H1 (cell line): ENCODE measurements at regions of chr11 and their contacts with region 1.

Region 1: DNA sequence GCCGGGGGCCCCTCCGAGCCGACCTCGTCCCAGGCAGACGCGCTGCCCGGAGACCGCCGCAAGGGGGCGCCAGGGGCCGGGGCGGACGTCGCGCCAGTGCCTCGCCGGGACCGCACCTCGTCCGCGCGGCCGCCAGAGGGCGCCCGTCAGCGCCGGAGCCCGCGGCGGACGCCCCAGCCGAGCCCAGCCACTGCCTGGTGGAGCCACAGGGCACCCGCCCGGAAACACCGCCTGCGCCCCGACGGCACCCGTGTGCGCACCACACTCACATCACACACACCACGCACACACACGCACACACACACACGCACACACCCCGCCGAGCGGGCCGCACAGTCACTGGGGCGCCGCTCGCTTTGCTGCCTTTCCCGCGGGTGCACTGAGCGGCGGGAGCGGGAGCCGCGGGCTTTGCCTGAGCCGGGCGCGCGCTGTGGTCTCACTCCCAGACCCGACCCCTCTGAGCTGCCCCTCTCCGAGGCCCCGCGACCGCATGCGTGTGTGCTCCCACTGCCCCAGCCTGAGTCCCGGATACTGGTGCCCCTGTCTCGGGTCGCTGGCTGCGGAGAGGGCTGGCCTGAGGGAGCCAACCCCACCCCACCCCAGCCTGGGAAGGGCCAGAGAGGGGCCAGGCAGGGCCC is 449.3 kb downstream of the OPCML start:
- DNase-seq: peak in 1 of 2 experiments; percentile 95
- H3K4me3 ChIP-seq: peak overlapping the region; percentile 43 to 65 (median 54)
- H3K27ac ChIP-seq: no peak overlapping the region
- H3K4me1 ChIP-seq: peaks cover 0 to 9% (median 6%) of the 10 kb centered on the region in 4 experiments; a peak in 6 of 7 replicates
- H3K27me3 ChIP-seq: peaks cover 0 to 8% (median 6%) of the 10 kb centered on the region in 4 experiments; a peak in 3 of 7 replicates
- CTCF ChIP-seq: peak; percentile 93 to 99 (median 98)
- EP300 ChIP-seq: no peak; a peak in 1 of 3 replicates
- POLR2A ChIP-seq: no peak
- RAD21 ChIP-seq: peak; percentile 52 to 84; a peak in 3 of 4 replicates

Region 2: GRCh38 chr11:132821014-132821413 is 262.0 kb before region 1 on chr11:
- CTCF ChIA-PET with region 1: no interaction called
- POLR2A ChIA-PET with region 1: no interaction called
- DNase-seq: peak in 1 of 2 experiments; percentile 49
- H3K4me3 ChIP-seq: no peak overlapping the region
- H3K27ac ChIP-seq: no peak overlapping the region
- H3K4me1 ChIP-seq: peaks cover 0 to 5% (median 2%) of the 10 kb centered on the region in 4 experiments; a peak in 3 of 7 replicates
- H3K27me3 ChIP-seq: no peaks in the 10 kb centered on the region
- CTCF ChIP-seq: no peak
- EP300 ChIP-seq: no peak
- POLR2A ChIP-seq: no peak
- RAD21 ChIP-seq: no peak

Region 3: GRCh38 chr11:133047036-133047770 is 35.8 kb before region 1 on chr11:
- CTCF ChIA-PET with region 1: interaction called, 11 read pairs
- POLR2A ChIA-PET with region 1: no interaction called
- DNase-seq: no peak
- H3K4me3 ChIP-seq: no peak overlapping the region
- H3K27ac ChIP-seq: no peak overlapping the region
- H3K4me1 ChIP-seq: peaks cover 2 to 9% (median 5%) of the 10 kb centered on the region in 4 experiments; a peak in 5 of 7 replicates
- H3K27me3 ChIP-seq: no peaks in the 10 kb centered on the region
- CTCF ChIP-seq: no peak
- EP300 ChIP-seq: no peak
- POLR2A ChIP-seq: no peak
- RAD21 ChIP-seq: no peak

Region 4: GRCh38 chr11:133107763-133108162 is 24.8 kb after region 1 on chr11:
- CTCF ChIA-PET with region 1: interaction called, 12 read pairs
- POLR2A ChIA-PET with region 1: no interaction called
- DNase-seq: no peak
- H3K4me3 ChIP-seq: no peak overlapping the region
- H3K27ac ChIP-seq: no peak overlapping the region
- H3K4me1 ChIP-seq: no peaks in the 10 kb centered on the region
- H3K27me3 ChIP-seq: no peaks in the 10 kb centered on the region
- CTCF ChIP-seq: no peak
- EP300 ChIP-seq: no peak
- POLR2A ChIP-seq: no peak
- RAD21 ChIP-seq: no peak

Region 5: GRCh38 chr11:133149698-133150097 is 66.7 kb after region 1 on chr11:
- CTCF ChIA-PET with region 1: interaction called, 102 read pairs
- POLR2A ChIA-PET with region 1: no interaction called
- DNase-seq: no peak
- H3K4me3 ChIP-seq: no peak overlapping the region
- H3K27ac ChIP-seq: no peak overlapping the region
- H3K4me1 ChIP-seq: peaks cover 0 to 2% (median 0%) of the 10 kb centered on the region in 4 experiments; a peak in 2 of 7 replicates
- H3K27me3 ChIP-seq: no peaks in the 10 kb centered on the region
- CTCF ChIP-seq: peak in 1 of 3 experiments; percentile 12; a peak in 1 of 4 replicates
- EP300 ChIP-seq: no peak
- POLR2A ChIP-seq: no peak
- RAD21 ChIP-seq: no peak

Region 6: DNA sequence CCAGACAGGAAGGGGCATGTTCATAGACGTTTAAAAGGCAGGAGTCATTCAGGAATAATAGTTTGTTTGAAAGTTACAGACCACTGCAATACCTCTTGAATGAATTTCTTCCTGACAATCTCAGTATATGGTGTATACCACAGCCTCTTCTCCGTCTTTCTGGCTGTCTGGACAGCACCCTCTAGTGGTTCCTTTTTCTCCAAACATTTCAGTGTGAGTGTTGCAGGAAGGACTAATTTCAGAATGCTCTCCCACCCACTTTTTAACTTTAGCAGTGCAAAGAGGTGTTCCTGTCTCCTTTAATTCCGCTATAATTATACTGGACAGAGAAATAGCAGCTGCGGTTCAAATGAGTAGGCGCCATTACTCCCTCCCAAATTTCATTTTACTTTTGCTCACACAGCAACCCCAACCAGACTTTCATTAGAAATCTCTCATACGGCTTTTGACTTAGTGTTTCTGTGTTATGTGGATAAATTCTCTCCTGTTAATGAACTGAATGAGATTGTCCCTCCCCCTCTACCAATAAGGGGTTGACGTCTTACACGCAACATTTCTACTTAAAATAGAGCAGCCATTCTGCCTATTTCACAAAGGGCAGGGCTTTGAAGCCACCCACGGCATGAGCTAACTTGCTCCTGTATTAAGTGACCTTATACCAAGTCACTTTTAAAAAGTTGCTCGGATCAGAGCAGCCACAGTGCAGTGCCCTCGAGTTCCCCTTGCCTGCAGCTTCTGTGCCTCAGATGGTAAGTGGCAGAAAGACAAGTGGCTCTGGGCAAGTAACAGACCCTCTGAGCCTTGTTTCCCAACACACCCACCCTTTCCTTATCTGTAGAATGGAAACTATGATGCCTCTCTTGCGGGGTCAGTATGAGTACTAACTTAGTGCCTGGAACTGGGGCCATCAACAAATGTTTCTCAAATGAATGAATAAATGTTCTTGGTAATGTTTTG is 80.8 kb after region 1 on chr11:
- CTCF ChIA-PET with region 1: interaction called, 32 read pairs
- POLR2A ChIA-PET with region 1: no interaction called
- DNase-seq: no peak
- H3K4me3 ChIP-seq: no peak overlapping the region
- H3K27ac ChIP-seq: no peak overlapping the region
- H3K4me1 ChIP-seq: peaks cover 2 to 5% (median 4%) of the 10 kb centered on the region in 4 experiments; a peak in 5 of 7 replicates
- H3K27me3 ChIP-seq: no peaks in the 10 kb centered on the region
- CTCF ChIP-seq: peak in 2 of 3 experiments; percentile 74 to 79; a peak in 3 of 4 replicates
- EP300 ChIP-seq: no peak
- POLR2A ChIP-seq: no peak
- RAD21 ChIP-seq: peak; percentile 73 to 74

Region 7: GRCh38 chr11:133243832-133244231 is 160.9 kb after region 1 on chr11:
- CTCF ChIA-PET with region 1: no interaction called
- POLR2A ChIA-PET with region 1: no interaction called
- DNase-seq: peak in 1 of 2 experiments; percentile 52
- H3K4me3 ChIP-seq: no peak overlapping the region
- H3K27ac ChIP-seq: no peak overlapping the region
- H3K4me1 ChIP-seq: peaks cover 2 to 11% (median 5%) of the 10 kb centered on the region in 4 experiments; a peak in 5 of 7 replicates
- H3K27me3 ChIP-seq: no peaks in the 10 kb centered on the region
- CTCF ChIP-seq: peak; percentile 51 to 75 (median 71)
- EP300 ChIP-seq: no peak
- POLR2A ChIP-seq: no peak
- RAD21 ChIP-seq: peak; percentile 34 to 56

Region 8: DNA sequence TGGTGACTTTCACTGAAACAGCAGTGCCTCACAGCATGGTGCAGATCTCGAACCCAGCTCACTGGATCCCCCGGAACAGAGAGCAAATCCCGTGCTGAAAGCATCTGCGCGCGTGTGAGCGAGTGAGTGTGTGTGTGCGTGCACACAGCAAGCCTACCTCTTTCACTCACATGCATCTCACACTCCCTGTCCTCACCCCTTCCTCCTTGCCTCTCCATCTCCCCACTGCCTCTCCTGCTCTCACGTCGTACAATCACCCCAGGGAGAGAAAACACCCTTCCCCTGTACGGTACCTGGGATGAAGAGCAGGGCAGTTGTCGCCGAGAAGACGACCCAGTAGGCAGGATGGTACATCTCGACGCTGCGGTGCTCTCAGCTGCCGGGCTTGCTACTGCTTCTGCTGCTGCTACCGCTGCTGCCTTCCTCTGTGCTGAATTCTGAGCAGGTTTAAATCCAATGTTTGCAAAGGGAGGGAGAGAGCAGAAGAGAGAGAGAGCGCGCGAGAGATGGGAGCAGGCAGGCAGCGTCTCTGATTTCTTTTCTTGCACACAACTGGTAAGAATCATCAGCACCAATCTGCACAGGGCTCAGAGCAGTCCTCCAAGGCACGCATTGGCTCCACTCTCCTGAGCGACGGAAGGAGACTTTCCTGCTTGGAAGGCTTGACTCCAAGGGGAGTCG is 449.1 kb after region 1 on chr11 and contains the start of gene OPCML:
- CTCF ChIA-PET with region 1: interaction called, 11 read pairs
- POLR2A ChIA-PET with region 1: interaction called, 3 read pairs
- DNase-seq: peak in 1 of 2 experiments; percentile 60
- H3K4me3 ChIP-seq: peak within 1 kb of the TSS; percentile 64 to 72 (median 70)
- H3K27ac ChIP-seq: peak within 1 kb of the TSS; percentile 37; the same call in 1 of the 2 replicates
- H3K4me1 ChIP-seq: peaks cover 12 to 38% (median 21%) of the 10 kb centered on the region in 4 experiments
- H3K27me3 ChIP-seq: peaks cover 0 to 19% (median 14%) of the 10 kb centered on the region in 4 experiments; a peak in 4 of 7 replicates
- CTCF ChIP-seq: no peak
- EP300 ChIP-seq: no peak
- POLR2A ChIP-seq: no peak
- RAD21 ChIP-seq: peak; percentile 7 to 8; a peak in 1 of 4 replicates
- total RNA-seq, gene OPCML: 2.1 and 2.3 TPM in 2 replicates

Region 9: GRCh38 chr11:133834682-133835592 is 752.0 kb after region 1 on chr11:
- CTCF ChIA-PET with region 1: interaction called, 97 read pairs
- POLR2A ChIA-PET with region 1: interaction called, 3 read pairs
- DNase-seq: peak; percentile 68 to 78
- H3K4me3 ChIP-seq: no peak overlapping the region
- H3K27ac ChIP-seq: no peak overlapping the region
- H3K4me1 ChIP-seq: peaks cover 0 to 2% (median 0%) of the 10 kb centered on the region in 4 experiments; a peak in 3 of 7 replicates
- H3K27me3 ChIP-seq: no peaks in the 10 kb centered on the region
- CTCF ChIP-seq: peak; percentile 58 to 93 (median 89)
- EP300 ChIP-seq: no peak
- POLR2A ChIP-seq: no peak
- RAD21 ChIP-seq: peak; percentile 97